Thyroid gland (tissue), 4 donors: ENCODE measurements at regions of chr11 and their contacts with region 1.

Region 1: GRCh38 chr11:75142714-75143419 is 8.0 kb upstream of the SLCO2B1 start:
- DNase-seq: peak; percentile 30 to 40
- H3K4me3 ChIP-seq: no peak overlapping the region
- H3K27ac ChIP-seq: no peak overlapping the region
- H3K4me1 ChIP-seq: peaks cover 0 to 12% of the 10 kb centered on the region in 2 donors
- H3K27me3 ChIP-seq: no peaks in the 10 kb centered on the region
- CTCF ChIP-seq: no peak
- POLR2A ChIP-seq: no peak

Region 2: DNA sequence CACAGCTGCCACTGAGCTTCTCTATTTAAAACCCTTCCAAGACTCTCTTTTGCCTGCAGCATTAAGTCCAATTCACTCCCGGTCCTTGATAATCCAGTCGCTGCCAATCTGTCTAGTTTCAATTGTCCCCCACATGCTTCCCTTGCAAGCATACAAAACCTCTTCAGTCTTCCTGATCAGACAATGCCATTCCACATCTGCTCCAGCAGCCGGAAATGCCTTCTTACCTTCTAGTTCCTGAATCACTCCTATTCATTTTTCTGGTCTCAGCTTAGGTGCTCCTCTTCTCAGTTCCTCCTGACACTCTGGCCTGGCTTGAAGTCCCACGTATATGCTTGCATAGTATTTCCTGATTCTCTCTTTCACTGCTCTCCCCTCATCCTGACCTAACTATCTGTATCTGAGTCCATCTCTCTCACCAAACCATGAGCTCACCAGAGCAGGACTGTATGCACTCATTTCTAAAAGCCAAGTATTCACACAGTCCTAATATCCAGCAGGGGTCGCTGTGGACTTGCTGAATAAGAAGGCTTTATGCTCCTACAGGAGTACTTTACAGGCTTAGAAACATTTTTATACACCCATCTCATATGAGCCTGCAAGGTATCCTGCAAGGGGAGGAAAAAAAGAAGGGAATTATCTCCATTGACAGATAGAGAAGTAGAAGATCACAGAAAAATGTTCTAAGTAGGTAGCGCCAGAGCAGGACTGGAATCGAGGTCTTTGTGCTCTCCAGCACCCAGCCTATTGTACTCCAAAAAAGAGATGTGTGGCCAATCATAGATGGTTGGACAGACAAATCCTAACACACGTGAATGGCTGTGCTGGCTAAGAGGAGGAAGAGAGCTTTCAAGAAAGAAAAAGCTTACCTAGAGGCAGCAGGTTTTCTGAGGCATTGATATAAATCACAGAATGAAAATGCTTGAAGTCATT is 213.2 kb before region 1 on chr11:
- intact Hi-C with region 1: loop called (anchors 10 kb)
- DNase-seq: peak; percentile 63 to 74
- H3K4me3 ChIP-seq: no peak overlapping the region
- H3K27ac ChIP-seq: no peak overlapping the region
- H3K4me1 ChIP-seq: no peaks in the 10 kb centered on the region
- H3K27me3 ChIP-seq: no peaks in the 10 kb centered on the region
- CTCF ChIP-seq: peak; percentile 52 to 87 (median 80)
- POLR2A ChIP-seq: no peak

Region 3: GRCh38 chr11:75204685-75205563 is 62.1 kb after region 1 on chr11:
- intact Hi-C with region 1: loop called (anchors 2 kb)
- DNase-seq: peak; percentile 91 to 94
- H3K4me3 ChIP-seq: no peak overlapping the region
- H3K27ac ChIP-seq: no peak overlapping the region
- H3K4me1 ChIP-seq: peaks cover 0 to 3% of the 10 kb centered on the region in 2 donors
- H3K27me3 ChIP-seq: no peaks in the 10 kb centered on the region
- CTCF ChIP-seq: peak; percentile 79 to 89 (median 84)
- POLR2A ChIP-seq: no peak

Region 4: DNA sequence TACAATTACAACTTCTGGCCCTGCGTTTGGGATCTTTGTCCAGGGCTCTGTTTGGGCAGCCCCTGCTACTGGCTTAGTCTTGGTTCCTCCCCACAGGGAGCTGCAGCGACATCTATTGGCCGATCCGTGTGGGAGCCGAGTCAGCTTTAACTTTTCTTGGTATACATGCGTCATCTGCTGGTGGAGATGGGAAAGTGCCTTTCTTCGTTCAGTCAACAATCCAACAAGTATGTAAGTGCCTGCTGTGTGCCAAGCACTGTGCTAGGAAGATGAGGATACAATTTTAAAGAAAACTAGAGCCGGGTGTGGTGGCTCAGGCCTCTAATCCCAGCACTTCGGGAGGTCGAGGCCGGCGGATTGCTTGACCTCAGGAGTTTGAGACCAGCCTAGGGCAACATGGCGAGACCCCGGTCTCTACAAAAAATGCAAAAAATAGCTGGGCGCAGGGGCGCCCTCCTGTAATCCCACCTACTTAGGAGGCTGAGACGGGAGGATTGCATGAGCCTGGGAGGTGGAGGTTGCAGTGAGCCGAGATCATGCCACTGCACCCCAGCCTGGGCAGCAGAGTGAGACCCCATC is 105.9 kb after region 1 on chr11:
- intact Hi-C with region 1: loop called (anchors 5 kb)
- DNase-seq: peak; percentile 82 to 87
- H3K4me3 ChIP-seq: no peak overlapping the region
- H3K27ac ChIP-seq: no peak overlapping the region
- H3K4me1 ChIP-seq: no peaks in the 10 kb centered on the region
- H3K27me3 ChIP-seq: no peaks in the 10 kb centered on the region
- CTCF ChIP-seq: peak; percentile 59 to 99 (median 98)
- POLR2A ChIP-seq: no peak